AG04449 (cell line): ENCODE measurements at regions of chr1 and their contacts with region 1.

Region 1: GRCh38 chr1:109277434-109278204 is 5.3 kb downstream of the PSRC1 start:
- DNase-seq: no peak
- H3K4me3 ChIP-seq: no peak overlapping the region
- CTCF ChIP-seq: peak; percentile 94

Region 2: DNA sequence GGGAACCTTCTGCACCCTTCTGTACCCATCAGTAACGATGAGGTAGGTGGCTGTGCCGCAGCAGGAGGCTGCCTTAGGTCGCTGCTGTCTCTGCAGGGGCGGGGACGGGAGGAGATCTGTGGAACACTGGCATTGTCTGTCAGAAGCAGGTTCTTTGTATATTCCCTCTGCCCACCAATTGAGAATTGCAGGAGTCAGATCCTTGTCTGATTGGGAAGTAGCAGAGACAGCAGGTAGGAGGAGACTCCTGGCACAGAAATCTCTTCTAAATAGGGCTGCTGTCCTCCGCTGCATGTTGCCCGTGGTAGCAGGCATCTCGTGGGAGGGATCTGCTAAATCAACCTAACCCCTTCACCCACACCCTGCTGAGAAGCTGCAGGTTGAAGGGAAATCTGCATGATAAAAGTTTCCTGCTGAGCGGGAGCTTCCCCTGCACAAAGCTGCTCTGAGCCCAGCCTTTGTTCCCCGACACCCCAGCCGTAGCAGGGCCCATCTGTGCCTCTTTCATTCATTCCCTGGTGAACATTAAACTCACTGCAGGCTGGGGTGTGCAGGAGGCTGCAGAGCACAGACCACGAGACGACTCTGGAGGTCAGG is 48.0 kb before region 1 on chr1:
- CTCF ChIA-PET with region 1: no interaction called
- POLR2A ChIA-PET with region 1: no interaction called
- DNase-seq: no peak
- H3K4me3 ChIP-seq: no peak overlapping the region
- CTCF ChIP-seq: no peak

Region 3: GRCh38 chr1:109248797-109249642 is 28.6 kb before region 1 on chr1 and contains the start of gene CELSR2:
- CTCF ChIA-PET with region 1: interaction called, 29 read pairs
- POLR2A ChIA-PET with region 1: no interaction called
- DNase-seq: no peak
- H3K4me3 ChIP-seq: peak within 1 kb of the TSS; percentile 52
- CTCF ChIP-seq: no peak

Region 4: GRCh38 chr1:109263597-109264398 is 13.8 kb before region 1 on chr1:
- CTCF ChIA-PET with region 1: interaction called, 87 read pairs
- POLR2A ChIA-PET with region 1: no interaction called
- DNase-seq: no peak
- H3K4me3 ChIP-seq: no peak overlapping the region
- CTCF ChIP-seq: peak; percentile 98

Region 5: GRCh38 chr1:109290998-109291397 is 13.4 kb after region 1 on chr1:
- CTCF ChIA-PET with region 1: interaction called, 20 read pairs
- POLR2A ChIA-PET with region 1: interaction called, 4 read pairs
- DNase-seq: no peak
- H3K4me3 ChIP-seq: no peak overlapping the region
- CTCF ChIP-seq: no peak

Region 6: DNA sequence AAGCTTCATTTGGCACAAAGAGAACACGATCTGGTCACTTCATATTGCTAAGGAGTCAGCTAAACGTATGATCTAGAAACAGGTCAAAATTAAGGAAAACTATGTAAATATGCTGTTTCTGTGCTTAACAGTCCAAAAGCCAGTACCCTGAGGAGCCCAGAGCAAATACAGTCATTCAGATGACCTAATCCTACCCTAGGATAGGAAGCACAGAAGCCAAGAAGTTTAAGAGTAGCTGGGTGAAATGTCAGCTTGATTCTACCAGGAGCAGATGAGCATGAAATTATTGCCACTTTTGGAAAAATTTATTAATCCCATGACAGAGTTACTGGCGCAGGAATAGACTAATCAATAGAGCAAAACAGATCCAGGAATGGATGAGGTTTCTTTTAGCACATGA is 101.8 kb after region 1 on chr1:
- CTCF ChIA-PET with region 1: interaction called, 19 read pairs
- POLR2A ChIA-PET with region 1: interaction called, 4 read pairs
- DNase-seq: no peak
- H3K4me3 ChIP-seq: no peak overlapping the region
- CTCF ChIP-seq: no peak

Region 7: GRCh38 chr1:109509176-109510134 is 231.8 kb after region 1 on chr1 and contains the start of gene AMIGO1:
- CTCF ChIA-PET with region 1: no interaction called
- POLR2A ChIA-PET with region 1: no interaction called
- DNase-seq: no peak
- H3K4me3 ChIP-seq: peak within 1 kb of the TSS; percentile 67
- CTCF ChIP-seq: no peak